CD8-positive, alpha-beta T cell (primary cell): ENCODE measurements at regions of chr16 and their contacts with region 1.

Region 1: GRCh38 chr16:23149349-23149996 is at the start of gene USP31:
- DNase-seq: peak; percentile 76 to 95 (median 87)
- ATAC-seq: peak; percentile 95
- H3K4me3 ChIP-seq: peak within 1 kb of the TSS; percentile 64 to 78
- H3K4me3 Mint-ChIP-seq: peak within 1 kb of the TSS; percentile 94
- H3K27ac ChIP-seq: peak within 1 kb of the TSS; percentile 17 to 37
- H3K27ac Mint-ChIP-seq: peak within 1 kb of the TSS; percentile 64
- H3K4me1 ChIP-seq: peaks cover 10% of the 10 kb centered on the region
- H3K4me1 Mint-ChIP-seq: peaks cover 20% of the 10 kb centered on the region
- H3K27me3 ChIP-seq: no peaks in the 10 kb centered on the region
- H3K27me3 Mint-ChIP-seq: peaks cover 5% of the 10 kb centered on the region
- CTCF ChIP-seq: no peak
- total RNA-seq, gene USP31: 1.6 to 1.8 TPM

Region 2: GRCh38 chr16:21523411-21524067 is 1625.9 kb before region 1 on chr16:
- CTCF ChIA-PET with region 1: no interaction called
- POLR2A ChIA-PET with region 1: no interaction called
- intact Hi-C with region 1: loop called in 1 of 2 experiments (anchors 10 kb)
- DNase-seq: no peak
- ATAC-seq: no peak
- H3K4me3 ChIP-seq: no peak overlapping the region
- H3K4me3 Mint-ChIP-seq: no peak overlapping the region
- H3K27ac ChIP-seq: no peak overlapping the region
- H3K27ac Mint-ChIP-seq: no peak overlapping the region
- H3K4me1 ChIP-seq: no peaks in the 10 kb centered on the region
- H3K4me1 Mint-ChIP-seq: peaks cover 8% of the 10 kb centered on the region
- H3K27me3 ChIP-seq: no peaks in the 10 kb centered on the region
- H3K27me3 Mint-ChIP-seq: no peaks in the 10 kb centered on the region
- CTCF ChIP-seq: no peak

Region 3: DNA sequence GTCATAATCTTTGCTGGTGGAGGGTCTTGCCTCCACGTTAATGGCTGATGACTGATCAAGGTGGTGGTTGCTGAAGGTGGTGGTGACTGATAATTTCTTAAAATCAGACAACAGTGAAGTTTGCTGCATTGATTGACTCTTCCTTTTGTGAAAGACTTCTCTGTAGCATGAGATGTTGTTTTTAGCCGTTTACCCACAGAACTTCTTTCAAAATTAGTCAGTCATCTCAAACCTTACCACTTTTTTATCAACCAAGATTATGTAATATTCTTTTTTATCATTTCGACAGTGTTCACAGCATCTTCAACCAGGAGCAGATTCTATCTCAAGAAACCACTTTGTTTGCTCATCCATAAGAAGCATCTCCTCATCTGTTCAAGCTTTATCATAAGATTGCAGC is 1190.4 kb before region 1 on chr16:
- CTCF ChIA-PET with region 1: no interaction called
- POLR2A ChIA-PET with region 1: no interaction called
- intact Hi-C with region 1: loop called (anchors 5 kb)
- DNase-seq: no peak
- ATAC-seq: no peak
- H3K4me3 ChIP-seq: no peak overlapping the region
- H3K4me3 Mint-ChIP-seq: no peak overlapping the region
- H3K27ac ChIP-seq: no peak overlapping the region
- H3K27ac Mint-ChIP-seq: no peak overlapping the region
- H3K4me1 ChIP-seq: peaks cover 11% of the 10 kb centered on the region
- H3K4me1 Mint-ChIP-seq: peaks cover 36% of the 10 kb centered on the region
- H3K27me3 ChIP-seq: no peaks in the 10 kb centered on the region
- H3K27me3 Mint-ChIP-seq: no peaks in the 10 kb centered on the region
- CTCF ChIP-seq: no peak

Region 4: DNA sequence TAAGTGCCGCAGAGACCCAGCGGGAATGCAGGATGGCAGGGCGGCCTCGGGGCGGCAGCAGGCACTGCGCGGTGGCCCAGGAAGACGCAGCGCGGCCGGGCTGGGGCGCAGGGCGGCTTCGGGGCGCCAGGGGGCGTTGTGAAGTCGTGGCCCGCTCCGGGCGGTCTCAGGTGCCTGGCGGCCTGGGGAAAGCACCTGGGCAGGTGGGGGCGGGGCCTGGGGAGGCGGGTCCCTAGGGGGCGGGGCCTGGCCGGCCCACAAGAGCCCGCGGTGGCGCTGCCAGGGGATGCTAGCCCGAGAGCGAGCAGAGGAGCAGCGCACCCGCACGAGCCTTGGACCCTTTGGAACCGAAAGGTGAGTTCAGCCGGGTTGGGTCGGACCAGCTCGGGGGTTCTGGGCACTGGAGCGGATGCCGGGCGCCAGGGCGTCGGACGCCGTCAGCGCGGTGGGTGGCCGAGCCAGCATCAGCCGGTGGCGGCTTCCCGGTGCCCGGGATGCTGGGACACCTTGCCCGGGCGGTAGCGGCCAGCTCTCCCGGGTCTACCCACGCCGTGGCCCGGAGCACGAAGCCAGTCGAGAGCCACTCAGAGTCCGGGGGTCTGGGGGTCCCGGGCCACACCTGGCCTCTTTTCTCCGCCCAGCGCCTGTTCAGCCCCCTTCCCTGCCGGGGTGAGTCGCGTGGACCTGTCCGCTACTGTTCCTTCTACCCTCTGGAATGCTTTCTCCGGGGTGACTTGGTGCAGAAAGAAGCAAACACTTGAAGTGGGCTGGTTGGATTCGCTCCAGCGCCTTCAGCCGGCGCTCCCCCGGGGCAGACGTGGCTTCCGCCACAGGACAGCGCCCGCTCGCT is 33.2 kb after region 1 on chr16 and contains the start of gene SCNN1G:
- CTCF ChIA-PET with region 1: no interaction called
- POLR2A ChIA-PET with region 1: no interaction called
- intact Hi-C with region 1: loop called in 1 of 2 experiments (anchors 2 kb)
- DNase-seq: peak; percentile 39 to 84 (median 68)
- ATAC-seq: peak; percentile 99
- H3K4me3 ChIP-seq: peak within 1 kb of the TSS in 1 of 2 experiments; percentile 15
- H3K4me3 Mint-ChIP-seq: peak within 1 kb of the TSS; percentile 39
- H3K27ac ChIP-seq: no peak within 1 kb of the TSS
- H3K27ac Mint-ChIP-seq: no peak within 1 kb of the TSS
- H3K4me1 ChIP-seq: peaks cover 5% of the 10 kb centered on the region
- H3K4me1 Mint-ChIP-seq: peaks cover 7% of the 10 kb centered on the region
- H3K27me3 ChIP-seq: peaks cover 24 to 25% of the 10 kb centered on the region in 2 experiments
- H3K27me3 Mint-ChIP-seq: peaks cover 62% of the 10 kb centered on the region
- CTCF ChIP-seq: peak; percentile 62
- total RNA-seq, gene SCNN1G: not detected